Heart left ventricle (tissue), 16 donors: ENCODE measurements at regions of chr17 and their contacts with region 1.

Region 1: DNA sequence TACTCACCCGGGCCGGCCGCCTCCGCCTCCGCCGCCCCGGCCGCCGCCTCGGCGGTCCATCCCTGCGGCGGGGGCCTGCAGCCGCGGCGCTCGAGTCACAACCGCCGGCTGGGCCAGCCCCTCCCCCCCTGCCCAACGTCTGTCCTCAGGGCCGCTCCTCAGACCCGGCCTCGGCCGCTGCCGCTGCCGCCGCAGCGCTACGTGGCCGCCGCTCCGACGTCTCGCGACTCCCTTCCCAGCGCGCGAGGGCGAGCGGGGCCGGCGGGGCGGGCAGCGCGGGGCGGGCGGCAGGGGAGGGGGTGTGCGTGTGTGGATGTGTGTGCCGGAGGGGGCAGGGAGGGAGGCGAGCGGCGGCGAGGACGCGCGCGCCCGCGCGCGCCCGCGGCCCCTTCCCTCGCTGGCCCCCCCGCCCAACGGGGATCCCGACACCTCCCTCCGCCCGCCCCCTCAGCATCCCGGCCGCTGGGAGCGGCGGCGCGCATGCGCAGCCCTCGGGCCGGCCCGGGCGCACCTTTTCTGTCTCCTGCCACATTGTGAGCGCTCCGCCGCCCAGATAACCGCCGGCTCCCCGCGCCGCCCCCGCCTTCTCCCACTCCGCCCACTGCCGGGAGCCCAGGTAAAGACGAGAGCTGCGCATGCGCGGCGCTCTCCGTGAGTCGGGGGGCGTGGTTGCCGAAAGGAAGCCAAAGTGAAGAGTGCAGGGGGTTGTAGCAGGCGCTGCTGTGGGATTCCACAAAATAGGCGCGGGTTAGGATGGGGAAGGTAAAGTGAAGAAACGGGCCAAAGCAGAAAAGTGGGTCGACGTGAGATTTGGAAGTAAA is at the start of gene ZNF652:
- DNase-seq: peak; percentile 88 to 93 (median 93)
- ATAC-seq: peak; percentile 82 to 96 (median 89)
- H3K4me3 ChIP-seq: peak within 1 kb of the TSS; percentile 77 to 98 (median 92)
- H3K27ac ChIP-seq: peak within 1 kb of the TSS; percentile 73 to 95 (median 89)
- H3K4me1 ChIP-seq: peaks cover 5 to 53% (median 26%) of the 10 kb centered on the region in 12 donors
- H3K27me3 ChIP-seq: no peaks in the 10 kb centered on the region
- CTCF ChIP-seq: no peak
- POLR2A ChIP-seq: peak in 1 of 2 donors; percentile 8
- total RNA-seq, gene ZNF652: 14.7 to 24.5 (median 23.1) TPM

Region 2: GRCh38 chr17:49327835-49328784 is 34.0 kb before region 1 on chr17:
- intact Hi-C with region 1: loop called in 1 of 10 experiments (anchors 5 kb)
- DNase-seq: no peak
- ATAC-seq: no peak
- H3K4me3 ChIP-seq: no peak overlapping the region
- H3K27ac ChIP-seq: no peak overlapping the region
- H3K4me1 ChIP-seq: peaks cover 0 to 17% (median 0%) of the 10 kb centered on the region in 12 donors
- H3K27me3 ChIP-seq: no peaks in the 10 kb centered on the region
- CTCF ChIP-seq: no peak
- POLR2A ChIP-seq: no peak

Region 3: GRCh38 chr17:49667854-49668253 is 305.7 kb after region 1 on chr17:
- intact Hi-C with region 1: no loop called
- DNase-seq: no peak
- ATAC-seq: no peak
- H3K4me3 ChIP-seq: no peak overlapping the region
- H3K27ac ChIP-seq: peak overlapping the region in 1 of 12 donors; percentile 34
- H3K4me1 ChIP-seq: peaks cover 0 to 57% (median 36%) of the 10 kb centered on the region in 12 donors
- H3K27me3 ChIP-seq: no peaks in the 10 kb centered on the region
- CTCF ChIP-seq: no peak
- POLR2A ChIP-seq: no peak